ENCODE measurements at regions of chr3 and their contacts with region 1.

Region 1: DNA sequence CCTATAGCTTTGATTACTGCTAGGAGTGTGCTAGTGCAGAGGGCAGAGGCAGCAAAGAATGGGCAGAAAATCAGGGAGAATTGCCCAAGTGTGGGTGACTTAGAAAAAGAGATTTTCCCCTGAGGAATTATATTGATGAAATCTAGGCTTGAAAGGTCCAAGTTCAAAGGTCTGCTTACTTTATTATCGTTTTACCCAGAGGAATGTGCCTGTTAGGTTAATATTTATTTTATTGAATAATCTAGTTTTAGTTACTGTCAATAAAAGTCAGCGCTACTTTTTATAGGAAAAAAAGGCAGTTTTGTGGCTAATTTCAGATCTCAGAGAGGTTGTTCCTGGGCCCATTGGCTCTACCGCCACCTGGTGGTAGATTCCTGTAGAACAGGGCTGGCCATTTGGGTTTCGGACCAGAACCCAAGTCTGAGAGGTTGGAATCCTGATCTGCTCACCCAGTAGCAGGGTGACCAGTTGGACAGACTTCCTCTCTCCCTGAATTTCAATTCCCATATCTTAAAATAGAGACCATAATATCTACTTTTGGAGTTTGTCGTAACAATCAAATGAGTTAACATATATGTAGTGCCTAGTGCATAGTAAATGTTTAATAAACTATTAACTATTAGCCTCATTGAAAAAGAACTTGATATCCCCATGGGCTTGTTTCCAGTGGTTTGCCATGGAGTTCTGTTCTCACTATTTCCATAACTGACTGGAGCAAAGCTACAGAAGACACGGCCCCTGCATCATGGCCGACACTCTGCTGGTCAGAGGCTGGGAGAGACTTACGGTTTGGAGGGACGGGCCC is 62.7 kb upstream of the ZNF148 start:
- DNase-seq: peak; percentile 90
- H3K4me3 Mint-ChIP-seq: no peak overlapping the region
- H3K27ac Mint-ChIP-seq: no peak overlapping the region
- H3K4me1 Mint-ChIP-seq: no peaks in the 10 kb centered on the region
- H3K27me3 Mint-ChIP-seq: peaks cover 5% of the 10 kb centered on the region

Region 2: GRCh38 chr3:124928333-124929202 is 509.3 kb before region 1 on chr3:
- intact Hi-C with region 1: loop called (anchors 1 kb)
- DNase-seq: peak; percentile 87
- H3K4me3 Mint-ChIP-seq: no peak overlapping the region
- H3K27ac Mint-ChIP-seq: no peak overlapping the region
- H3K4me1 Mint-ChIP-seq: peaks cover 6% of the 10 kb centered on the region
- H3K27me3 Mint-ChIP-seq: peaks cover 44% of the 10 kb centered on the region

Region 3: GRCh38 chr3:124995460-124995994 is 442.3 kb before region 1 on chr3:
- intact Hi-C with region 1: loop called (anchors 1 kb)
- DNase-seq: peak; percentile 87
- H3K4me3 Mint-ChIP-seq: no peak overlapping the region
- H3K27ac Mint-ChIP-seq: no peak overlapping the region
- H3K4me1 Mint-ChIP-seq: peaks cover 13% of the 10 kb centered on the region
- H3K27me3 Mint-ChIP-seq: no peaks in the 10 kb centered on the region

Region 4: DNA sequence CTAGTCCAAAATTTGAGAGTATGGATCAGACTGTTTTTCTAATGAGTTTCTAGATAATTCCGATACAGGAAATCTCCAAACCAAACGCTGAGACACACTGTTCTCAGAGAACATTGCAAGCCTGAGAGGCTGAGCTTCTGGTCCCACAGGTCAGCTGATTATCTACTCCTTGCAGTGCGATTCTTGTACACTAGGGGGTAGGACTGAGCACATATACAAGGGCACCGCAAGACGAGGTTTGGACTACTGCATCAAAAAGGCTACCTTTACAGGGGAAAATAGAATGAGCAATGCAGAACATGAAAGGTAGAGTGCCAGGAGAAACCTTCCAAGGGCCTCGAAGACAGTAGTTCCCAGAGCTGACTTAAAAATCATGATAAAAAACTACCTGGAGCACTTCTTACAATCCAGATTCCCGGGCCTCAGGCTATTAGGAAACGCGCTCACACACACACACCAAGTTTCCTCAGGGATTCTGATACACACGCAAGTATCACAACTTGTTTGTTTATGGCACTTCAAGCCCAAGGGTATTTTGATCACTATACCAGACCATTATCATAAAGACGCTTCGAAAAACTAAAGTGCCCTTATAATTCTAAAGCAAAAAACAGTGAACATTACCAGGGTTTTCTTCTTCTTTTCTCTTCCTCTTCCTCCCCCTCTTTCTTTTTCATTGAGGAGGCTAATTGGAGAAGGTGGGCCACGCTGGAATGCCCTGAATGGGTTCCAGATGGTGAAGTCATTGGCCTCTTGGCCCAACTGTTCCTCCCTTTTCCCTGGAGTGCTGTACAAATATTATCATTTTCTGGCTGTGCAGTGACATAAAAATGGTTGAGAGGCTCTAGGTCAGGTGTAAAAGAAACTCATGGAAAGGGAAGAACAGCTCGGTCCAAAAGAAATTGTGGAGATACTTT is 287.1 kb before region 1 on chr3:
- intact Hi-C with region 1: loop called (anchors 5 kb)
- DNase-seq: peak; percentile 90
- H3K4me3 Mint-ChIP-seq: no peak overlapping the region
- H3K27ac Mint-ChIP-seq: no peak overlapping the region
- H3K4me1 Mint-ChIP-seq: peaks cover 18% of the 10 kb centered on the region
- H3K27me3 Mint-ChIP-seq: peaks cover 36% of the 10 kb centered on the region

Region 5: GRCh38 chr3:125337506-125337905 is 100.3 kb before region 1 on chr3:
- intact Hi-C with region 1: no loop called
- DNase-seq: no peak
- H3K4me3 Mint-ChIP-seq: no peak overlapping the region
- H3K27ac Mint-ChIP-seq: no peak overlapping the region
- H3K4me1 Mint-ChIP-seq: peaks cover 19% of the 10 kb centered on the region
- H3K27me3 Mint-ChIP-seq: no peaks in the 10 kb centered on the region

Region 6: DNA sequence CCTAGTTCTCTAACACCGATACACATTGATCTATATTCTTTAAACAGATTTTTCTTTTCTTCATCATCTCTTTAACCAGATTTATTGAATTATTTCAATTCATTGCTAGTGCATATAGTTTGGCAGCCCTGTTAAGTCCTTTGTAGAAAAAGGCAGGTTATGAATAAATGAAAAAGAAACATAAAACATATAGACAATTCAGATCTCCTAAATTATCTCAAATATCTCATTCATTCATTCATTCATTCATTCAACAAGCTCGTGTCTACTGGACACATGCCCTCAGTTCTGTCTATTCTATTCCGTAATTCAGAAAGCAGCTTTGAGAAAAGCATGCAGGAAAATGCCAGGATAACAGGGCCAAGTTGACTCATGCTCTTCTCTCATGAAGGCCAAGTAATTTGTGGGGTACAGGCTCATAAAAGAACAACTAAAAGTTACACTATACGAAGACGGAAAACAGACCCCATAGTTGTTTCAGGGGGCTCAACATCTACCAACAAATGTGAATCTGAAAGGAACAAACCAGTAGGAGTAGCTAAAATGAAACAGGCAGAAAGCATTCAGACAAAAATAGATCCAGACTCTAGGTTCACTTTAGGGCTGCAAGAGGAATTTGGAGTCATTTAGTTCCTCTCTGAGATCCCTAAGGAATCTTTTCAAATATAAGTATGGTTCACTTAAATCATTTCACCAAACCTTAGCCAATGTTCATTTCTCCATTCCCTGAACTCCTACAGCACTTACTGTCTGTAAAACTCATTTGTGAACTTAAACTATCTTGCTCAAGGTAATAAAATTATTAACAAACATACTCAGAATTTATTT is 70.2 kb before region 1 on chr3:
- intact Hi-C with region 1: no loop called
- DNase-seq: no peak
- H3K4me3 Mint-ChIP-seq: no peak overlapping the region
- H3K27ac Mint-ChIP-seq: no peak overlapping the region
- H3K4me1 Mint-ChIP-seq: peaks cover 32% of the 10 kb centered on the region
- H3K27me3 Mint-ChIP-seq: no peaks in the 10 kb centered on the region